ENCODE measurements at regions of chr14 and their contacts with region 1.

Region 1: GRCh38 chr14:67943947-67944346 is 124.4 kb downstream of the RAD51B start:
- DNase-seq: peak; percentile 80
- H3K4me3 ChIP-seq: no peak overlapping the region
- H3K27ac ChIP-seq: no peak overlapping the region
- H3K4me1 ChIP-seq: no peaks in the 10 kb centered on the region
- CTCF ChIP-seq: peak; percentile 98

Region 2: GRCh38 chr14:67837011-67837624 is 106.8 kb before region 1 on chr14:
- CTCF ChIA-PET with region 1: no interaction called
- POLR2A ChIA-PET with region 1: no interaction called
- intact Hi-C with region 1: loop called (anchors 5 kb)
- DNase-seq: peak; percentile 79
- H3K4me3 ChIP-seq: no peak overlapping the region
- H3K27ac ChIP-seq: no peak overlapping the region
- H3K4me1 ChIP-seq: no peaks in the 10 kb centered on the region
- CTCF ChIP-seq: peak; percentile 90

Region 3: DNA sequence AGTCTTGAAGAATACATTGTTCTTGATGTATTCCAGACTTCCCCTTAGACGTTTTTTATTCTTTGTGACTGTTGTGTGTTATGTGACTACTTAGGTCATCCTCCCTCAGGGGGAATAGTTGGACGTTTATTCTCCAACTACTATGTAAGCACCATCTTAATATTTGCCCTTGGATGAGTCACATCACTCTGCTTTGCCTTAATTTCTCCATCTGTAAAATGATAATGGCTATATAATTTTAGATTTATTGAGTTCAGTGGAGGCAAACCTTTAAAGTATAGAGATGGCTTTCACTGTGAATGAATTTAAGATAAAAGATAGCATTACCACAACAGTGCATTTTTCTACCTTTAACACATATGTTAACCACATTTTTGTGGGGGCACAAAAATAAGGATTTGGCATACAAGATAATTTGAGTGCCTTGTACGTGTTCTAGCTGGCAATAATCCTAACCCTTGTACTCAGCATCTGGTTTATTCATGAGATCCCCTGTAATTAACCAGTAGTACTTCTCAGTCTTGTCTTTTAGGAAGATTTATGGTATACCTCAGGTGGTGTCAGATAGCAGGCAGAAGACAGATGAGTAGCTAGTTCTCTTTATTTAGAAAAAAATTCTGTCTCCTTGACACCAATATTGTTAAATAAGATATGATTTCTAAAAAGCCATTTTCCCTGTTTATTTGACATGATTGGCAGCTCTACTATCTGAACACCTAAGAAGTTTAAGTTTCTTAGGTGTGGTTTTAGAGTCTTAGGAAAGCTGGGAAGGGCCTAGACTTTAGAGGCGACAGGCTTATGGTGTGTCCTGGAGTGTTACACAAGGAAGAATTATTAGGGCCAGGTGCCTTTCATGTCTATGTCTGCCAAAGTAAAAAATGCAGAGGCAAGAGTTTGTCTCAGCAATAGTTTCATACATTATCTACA is 27.9 kb after region 1 on chr14:
- CTCF ChIA-PET with region 1: no interaction called
- POLR2A ChIA-PET with region 1: no interaction called
- intact Hi-C with region 1: no loop called
- DNase-seq: no peak
- H3K4me3 ChIP-seq: no peak overlapping the region
- H3K27ac ChIP-seq: no peak overlapping the region
- H3K4me1 ChIP-seq: no peaks in the 10 kb centered on the region
- CTCF ChIP-seq: no peak

Region 4: GRCh38 chr14:68824517-68825347 is 880.8 kb after region 1 on chr14:
- CTCF ChIA-PET with region 1: no interaction called
- POLR2A ChIA-PET with region 1: no interaction called
- intact Hi-C with region 1: loop called (anchors 2 kb)
- DNase-seq: peak; percentile 65
- H3K4me3 ChIP-seq: no peak overlapping the region
- H3K27ac ChIP-seq: no peak overlapping the region
- H3K4me1 ChIP-seq: peaks cover 45% of the 10 kb centered on the region
- CTCF ChIP-seq: peak; percentile 99

Region 5: GRCh38 chr14:68843471-68844209 is 899.7 kb after region 1 on chr14:
- CTCF ChIA-PET with region 1: interaction called, 3 read pairs
- POLR2A ChIA-PET with region 1: no interaction called
- intact Hi-C with region 1: loop called (anchors 5 kb)
- DNase-seq: peak; percentile 70
- H3K4me3 ChIP-seq: peak overlapping the region; percentile 33
- H3K27ac ChIP-seq: no peak overlapping the region
- H3K4me1 ChIP-seq: peaks cover 5% of the 10 kb centered on the region
- CTCF ChIP-seq: peak; percentile 100

Region 6: GRCh38 chr14:69441948-69442347 is 1498.0 kb after region 1 on chr14:
- CTCF ChIA-PET with region 1: no interaction called
- POLR2A ChIA-PET with region 1: interaction called, 10 read pairs
- intact Hi-C with region 1: no loop called
- DNase-seq: peak; percentile 88
- H3K4me3 ChIP-seq: peak overlapping the region; percentile 24
- H3K27ac ChIP-seq: peak overlapping the region; percentile 85
- H3K4me1 ChIP-seq: peaks cover 28% of the 10 kb centered on the region
- CTCF ChIP-seq: no peak